Heart left ventricle (tissue), 16 donors: ENCODE measurements at regions of chr21 and their contacts with region 1.

Region 1: DNA sequence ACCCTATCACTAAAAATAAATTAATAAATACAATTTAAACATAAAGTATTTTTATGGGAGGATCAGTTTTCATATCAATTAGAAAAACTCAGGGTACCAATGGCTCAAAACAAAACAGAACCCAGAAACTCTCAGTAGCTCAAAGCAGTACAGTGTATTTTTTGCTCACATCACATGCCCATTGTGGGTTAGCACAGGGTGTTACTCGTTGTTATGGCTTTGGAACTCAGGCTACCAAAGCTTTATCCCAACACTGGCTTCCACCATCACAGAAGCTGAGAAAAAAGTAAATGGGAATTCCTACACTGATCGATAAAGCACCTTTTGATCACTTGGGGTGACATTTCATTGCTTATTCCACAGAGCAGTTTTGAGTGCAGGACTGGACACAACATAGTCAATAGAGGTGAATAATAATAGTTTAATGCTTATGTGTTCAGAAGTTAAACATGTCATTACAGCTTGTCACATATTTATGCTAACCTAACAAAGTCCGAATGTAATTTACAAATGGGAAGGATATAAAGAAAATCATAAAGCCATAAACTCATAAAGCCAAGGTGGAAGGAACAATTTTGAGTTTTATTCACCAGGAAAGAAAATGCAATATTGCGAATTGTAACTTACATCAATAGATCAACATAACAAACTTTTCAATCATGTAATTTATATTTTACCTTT is 484.5 kb upstream of the TMPRSS15 start:
- DNase-seq: no peak
- ATAC-seq: no peak
- H3K4me3 ChIP-seq: no peak overlapping the region
- H3K27ac ChIP-seq: no peak overlapping the region
- H3K4me1 ChIP-seq: no peaks in the 10 kb centered on the region
- H3K27me3 ChIP-seq: no peaks in the 10 kb centered on the region
- CTCF ChIP-seq: no peak
- POLR2A ChIP-seq: no peak

Region 2: GRCh38 chr21:17708522-17709265 is 1179.4 kb before region 1 on chr21:
- intact Hi-C with region 1: no loop called
- DNase-seq: no peak
- ATAC-seq: no peak
- H3K4me3 ChIP-seq: no peak overlapping the region
- H3K27ac ChIP-seq: no peak overlapping the region
- H3K4me1 ChIP-seq: no peaks in the 10 kb centered on the region
- H3K27me3 ChIP-seq: no peaks in the 10 kb centered on the region
- CTCF ChIP-seq: no peak
- POLR2A ChIP-seq: no peak

Region 3: GRCh38 chr21:18265944-18266343 is 622.1 kb before region 1 on chr21:
- intact Hi-C with region 1: no loop called
- DNase-seq: no peak
- ATAC-seq: no peak
- H3K4me3 ChIP-seq: no peak overlapping the region
- H3K27ac ChIP-seq: no peak overlapping the region
- H3K4me1 ChIP-seq: no peaks in the 10 kb centered on the region
- H3K27me3 ChIP-seq: no peaks in the 10 kb centered on the region
- CTCF ChIP-seq: peak in 4 of 12 donors; percentile 10 to 24 (median 18)
- POLR2A ChIP-seq: no peak

Region 4: GRCh38 chr21:18832950-18833349 is 55.1 kb before region 1 on chr21:
- intact Hi-C with region 1: no loop called
- DNase-seq: no peak
- ATAC-seq: peak in 3 of 4 donors; percentile 48 to 62 (median 53)
- H3K4me3 ChIP-seq: no peak overlapping the region
- H3K27ac ChIP-seq: no peak overlapping the region
- H3K4me1 ChIP-seq: peaks cover 0 to 6% (median 0%) of the 10 kb centered on the region in 12 donors
- H3K27me3 ChIP-seq: no peaks in the 10 kb centered on the region
- CTCF ChIP-seq: no peak
- POLR2A ChIP-seq: no peak

Region 5: DNA sequence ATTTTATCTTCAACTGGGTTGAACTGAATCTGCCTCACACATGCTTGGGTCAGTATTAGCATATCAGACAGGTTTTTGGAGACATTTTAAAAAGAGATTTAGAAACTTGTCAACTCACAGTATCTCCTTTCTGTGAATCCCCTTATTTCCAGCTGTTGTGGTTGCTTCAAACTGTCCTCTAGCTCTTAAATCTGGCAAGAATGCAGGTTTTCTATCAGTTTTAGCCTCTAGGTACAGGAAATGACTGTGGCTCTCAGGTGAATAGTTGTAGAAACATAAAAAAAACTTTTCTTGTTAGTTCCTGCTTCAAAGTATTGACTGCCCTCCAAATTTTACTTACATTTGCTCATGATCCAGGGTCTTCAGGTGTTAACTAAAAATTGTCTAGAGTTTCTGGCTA is 11.2 kb after region 1 on chr21:
- intact Hi-C with region 1: loop called in 1 of 10 experiments (anchors 1 kb)
- DNase-seq: no peak
- ATAC-seq: no peak
- H3K4me3 ChIP-seq: no peak overlapping the region
- H3K27ac ChIP-seq: no peak overlapping the region
- H3K4me1 ChIP-seq: no peaks in the 10 kb centered on the region
- H3K27me3 ChIP-seq: no peaks in the 10 kb centered on the region
- CTCF ChIP-seq: no peak
- POLR2A ChIP-seq: no peak